Activated CD4-positive, alpha-beta memory T cell treated with anti-CD3 and anti-CD28 coated beads, Interleukin-2, amount 10 ng/mL, durations not matched to agents 7 days and 5 days (primary cell): ENCODE measurements at regions of chr4 and their contacts with region 1.

Region 1: GRCh38 chr4:82428969-82429727 is 1.1 kb downstream of the HNRNPDL start:
- DNase-seq: peak; percentile 94
- H3K4me3 Mint-ChIP-seq: peak overlapping the region; percentile 98
- H3K27ac Mint-ChIP-seq: peak overlapping the region; percentile 95
- H3K4me1 Mint-ChIP-seq: peaks cover 68% of the 10 kb centered on the region
- H3K27me3 Mint-ChIP-seq: no peaks in the 10 kb centered on the region

Region 2: DNA sequence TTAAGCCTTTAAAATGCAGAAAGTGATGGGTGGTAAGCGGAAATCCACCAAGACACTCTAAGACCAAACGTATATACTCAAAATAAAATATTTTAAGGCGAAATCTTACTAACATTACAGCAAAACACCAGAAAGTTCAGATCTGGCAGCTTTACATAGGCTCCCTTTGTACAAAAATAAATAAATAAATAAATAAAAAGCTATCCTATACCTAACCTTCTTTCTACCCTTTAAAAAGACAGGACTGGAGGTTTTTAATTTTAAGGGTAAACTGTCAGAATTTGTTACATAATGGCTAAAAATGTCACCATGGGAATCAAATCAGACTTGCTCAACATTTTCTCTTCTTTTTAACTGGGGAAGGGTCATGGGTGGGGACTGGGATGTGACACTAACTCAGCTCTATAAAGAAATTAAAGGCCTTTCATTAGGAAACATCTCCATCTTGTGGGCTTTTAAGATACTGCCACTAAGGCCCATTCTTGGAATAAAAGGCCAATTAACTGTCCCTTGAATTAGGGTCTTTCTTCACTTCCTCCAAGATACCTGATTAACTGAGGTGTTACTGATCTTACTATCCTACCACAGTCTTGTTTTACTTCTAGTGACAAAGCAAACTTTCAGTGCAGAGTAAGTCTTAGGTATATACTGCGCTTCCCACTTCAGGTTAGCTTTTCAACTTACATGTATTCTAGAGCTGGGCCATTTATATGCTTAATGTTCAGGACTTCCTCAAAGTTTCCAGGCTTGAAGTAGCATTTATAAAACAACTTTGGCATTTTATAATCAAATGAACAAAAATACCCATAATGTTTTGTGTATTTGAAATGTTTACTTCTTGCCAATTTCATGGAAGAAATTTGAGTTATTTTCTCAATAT is 68.6 kb before region 1 on chr4:
- CTCF ChIA-PET with region 1: interaction called, 11 read pairs
- POLR2A ChIA-PET with region 1: interaction called, 31 read pairs
- DNase-seq: no peak
- H3K4me3 Mint-ChIP-seq: no peak overlapping the region
- H3K27ac Mint-ChIP-seq: peak overlapping the region; percentile 11
- H3K4me1 Mint-ChIP-seq: peaks cover 86% of the 10 kb centered on the region
- H3K27me3 Mint-ChIP-seq: no peaks in the 10 kb centered on the region

Region 3: GRCh38 chr4:82373816-82374625 is 55.1 kb before region 1 on chr4 and contains the start of gene HNRNPD:
- CTCF ChIA-PET with region 1: interaction called, 39 read pairs
- POLR2A ChIA-PET with region 1: interaction called, 313 read pairs
- DNase-seq: peak; percentile 94
- H3K4me3 Mint-ChIP-seq: peak within 1 kb of the TSS; percentile 95
- H3K27ac Mint-ChIP-seq: peak within 1 kb of the TSS; percentile 96
- H3K4me1 Mint-ChIP-seq: peaks cover 40% of the 10 kb centered on the region
- H3K27me3 Mint-ChIP-seq: no peaks in the 10 kb centered on the region
- total RNA-seq, gene HNRNPD: 355 to 366 TPM

Region 4: DNA sequence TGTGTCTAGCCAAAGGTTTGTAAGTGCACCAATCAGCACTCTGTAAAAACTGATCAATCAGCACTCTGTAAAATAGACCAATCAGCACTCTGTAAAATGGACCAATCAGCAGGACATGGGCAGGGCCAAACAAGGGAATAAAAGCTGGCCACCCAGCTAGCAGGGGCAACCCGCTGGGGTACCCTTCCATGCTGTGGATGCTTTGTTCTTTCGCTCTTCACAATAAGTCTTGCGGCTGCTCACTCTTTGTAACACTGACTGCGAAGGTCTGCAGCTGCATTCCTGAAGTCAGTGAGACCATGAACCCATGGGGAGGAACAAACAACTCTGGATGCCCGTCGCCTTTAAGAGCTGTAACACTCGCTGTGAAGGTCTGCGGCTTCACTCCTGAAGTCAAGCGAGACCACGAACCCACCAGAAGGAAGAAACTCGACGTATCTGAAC is 13.2 kb before region 1 on chr4:
- CTCF ChIA-PET with region 1: interaction called, 6 read pairs
- POLR2A ChIA-PET with region 1: interaction called, 19 read pairs
- DNase-seq: no peak
- H3K4me3 Mint-ChIP-seq: no peak overlapping the region
- H3K27ac Mint-ChIP-seq: no peak overlapping the region
- H3K4me1 Mint-ChIP-seq: no peaks in the 10 kb centered on the region
- H3K27me3 Mint-ChIP-seq: peaks cover 24% of the 10 kb centered on the region

Region 5: DNA sequence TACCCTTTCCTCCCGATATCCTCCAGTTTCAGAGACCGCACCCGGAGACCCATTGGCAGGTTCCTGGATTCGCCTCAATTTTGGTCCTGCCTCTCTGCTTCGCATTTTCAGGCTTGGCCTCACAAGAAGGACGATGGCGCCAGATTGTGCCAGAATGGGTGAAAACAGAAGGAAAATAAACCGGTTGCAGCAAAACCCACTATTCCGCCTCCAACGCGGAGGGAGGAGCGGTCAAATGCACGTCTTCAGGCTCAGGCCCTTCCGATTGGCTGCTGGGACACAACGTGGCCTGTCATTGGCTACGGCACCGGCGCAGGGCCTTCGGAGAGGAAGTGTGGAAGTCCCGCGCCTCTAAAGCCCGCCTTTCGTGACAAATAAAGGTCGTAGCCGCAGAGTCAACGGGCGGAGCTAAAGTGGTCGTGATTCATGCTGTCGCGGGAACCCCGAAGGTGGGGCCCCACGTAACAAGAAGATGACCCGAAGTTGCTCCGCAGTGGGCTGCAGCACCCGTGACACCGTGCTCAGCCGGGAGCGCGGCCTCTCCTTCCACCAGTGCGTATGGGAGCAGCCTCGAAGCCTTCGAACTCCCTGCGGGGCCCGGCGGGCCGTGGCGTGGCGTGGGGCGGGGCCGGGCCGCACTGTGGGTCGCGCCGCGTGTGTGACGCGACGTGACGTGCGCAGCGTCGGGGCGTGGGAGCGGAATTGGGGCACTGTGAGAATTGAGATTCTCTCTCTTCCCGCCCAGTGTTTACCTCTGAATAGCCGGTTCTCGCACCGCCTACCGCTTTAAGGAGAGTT is 471.4 kb after region 1 on chr4 and contains the start of gene THAP9:
- CTCF ChIA-PET with region 1: interaction called, 5 read pairs
- POLR2A ChIA-PET with region 1: interaction called, 10 read pairs
- DNase-seq: peak; percentile 99
- H3K4me3 Mint-ChIP-seq: no peak within 1 kb of the TSS
- H3K27ac Mint-ChIP-seq: no peak within 1 kb of the TSS
- H3K4me1 Mint-ChIP-seq: peaks cover 37% of the 10 kb centered on the region
- H3K27me3 Mint-ChIP-seq: peaks cover 9% of the 10 kb centered on the region
- total RNA-seq, gene THAP9: 2.0 to 2.4 TPM